ENCODE measurements at regions of chr7 and their contacts with region 1.

Region 1: GRCh38 chr7:93055543-93056107 is 62.2 kb downstream of the SAMD9 start:
- DNase-seq: peak in 4 of 14 experiments; percentile 7 to 66 (median 62)
- ATAC-seq: peak; percentile 76
- H3K4me3 ChIP-seq: no peak overlapping the region
- H3K4me3 Mint-ChIP-seq: no peak overlapping the region
- H3K27ac ChIP-seq: no peak overlapping the region
- H3K27ac Mint-ChIP-seq: no peak overlapping the region
- H3K4me1 ChIP-seq: no peaks in the 10 kb centered on the region
- H3K4me1 Mint-ChIP-seq: no peaks in the 10 kb centered on the region
- H3K27me3 ChIP-seq: peaks cover 0 to 5% of the 10 kb centered on the region in 2 experiments
- H3K27me3 Mint-ChIP-seq: no peaks in the 10 kb centered on the region
- CTCF ChIP-seq: peak; percentile 93

Region 2: DNA sequence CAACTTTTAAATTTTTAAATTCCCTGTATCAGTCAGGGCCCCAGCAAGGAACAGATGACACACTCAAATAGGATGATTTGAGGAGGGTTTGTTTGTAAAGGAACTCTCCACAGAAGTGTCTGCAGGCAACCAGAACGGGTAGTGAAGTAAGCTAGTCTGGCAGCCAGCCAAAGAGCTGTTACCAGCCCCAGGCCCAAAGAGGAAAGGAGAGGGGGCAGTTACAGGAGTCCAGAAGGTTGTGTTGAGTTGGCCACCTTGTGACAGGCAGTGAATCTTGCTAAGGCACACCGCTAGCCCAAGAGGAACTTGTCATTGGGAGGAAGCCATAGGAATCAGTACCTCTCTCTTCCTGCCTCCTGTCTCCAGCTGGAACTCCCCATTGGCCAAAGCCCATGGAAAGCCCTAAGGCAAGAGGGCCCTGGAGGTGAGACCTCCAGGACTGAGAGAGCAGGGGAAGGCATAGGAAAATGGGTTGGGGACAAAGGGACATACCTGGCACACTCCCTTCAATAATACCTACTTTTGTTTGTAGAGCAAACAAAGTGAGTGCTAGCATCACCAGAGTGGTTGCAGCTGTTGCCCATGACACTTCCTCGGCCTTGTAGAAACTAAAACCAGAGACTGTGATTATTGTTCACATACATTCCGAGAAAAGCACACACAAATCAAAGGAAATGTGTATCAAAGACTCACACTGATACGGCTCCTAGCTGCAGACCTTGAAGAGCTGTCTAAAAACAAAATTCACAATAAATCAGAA is 633.8 kb before region 1 on chr7:
- CTCF ChIA-PET with region 1: no interaction called
- POLR2A ChIA-PET with region 1: no interaction called
- intact Hi-C with region 1: loop called (anchors 1 to 5 kb)
- DNase-seq: no peak
- ATAC-seq: no peak
- H3K4me3 ChIP-seq: no peak overlapping the region
- H3K4me3 Mint-ChIP-seq: no peak overlapping the region
- H3K27ac ChIP-seq: no peak overlapping the region
- H3K27ac Mint-ChIP-seq: no peak overlapping the region
- H3K4me1 ChIP-seq: peaks cover 11% of the 10 kb centered on the region
- H3K4me1 Mint-ChIP-seq: peaks cover 12% of the 10 kb centered on the region
- H3K27me3 ChIP-seq: peaks cover 2 to 11% of the 10 kb centered on the region in 2 experiments
- H3K27me3 Mint-ChIP-seq: peaks cover 12% of the 10 kb centered on the region
- CTCF ChIP-seq: no peak

Region 3: DNA sequence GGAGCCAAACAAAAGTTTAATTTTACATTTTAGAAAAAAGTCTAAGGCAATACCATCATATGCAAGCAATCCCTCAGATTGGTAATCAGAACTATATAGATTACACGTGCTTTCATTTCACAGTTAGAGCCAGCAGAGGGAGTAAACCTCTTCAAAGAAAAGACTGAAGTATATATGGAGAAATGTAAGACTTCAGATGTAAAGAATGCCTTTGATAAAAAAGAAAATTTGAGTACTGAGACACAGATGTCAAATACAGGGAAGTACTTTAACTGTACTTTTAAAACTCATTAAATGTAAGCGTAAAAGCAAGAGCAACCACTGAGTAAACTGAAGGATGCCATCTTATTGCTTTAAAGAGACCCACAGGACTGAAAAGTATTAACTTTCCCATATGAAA is 364.0 kb before region 1 on chr7:
- CTCF ChIA-PET with region 1: no interaction called
- POLR2A ChIA-PET with region 1: no interaction called
- intact Hi-C with region 1: loop called (anchors 1 to 5 kb)
- DNase-seq: peak in 4 of 14 experiments; percentile 26 to 74 (median 68)
- ATAC-seq: peak; percentile 90
- H3K4me3 ChIP-seq: no peak overlapping the region
- H3K4me3 Mint-ChIP-seq: no peak overlapping the region
- H3K27ac ChIP-seq: no peak overlapping the region
- H3K27ac Mint-ChIP-seq: no peak overlapping the region
- H3K4me1 ChIP-seq: no peaks in the 10 kb centered on the region
- H3K4me1 Mint-ChIP-seq: peaks cover 17% of the 10 kb centered on the region
- H3K27me3 ChIP-seq: no peaks in the 10 kb centered on the region
- H3K27me3 Mint-ChIP-seq: no peaks in the 10 kb centered on the region
- CTCF ChIP-seq: peak; percentile 67

Region 4: DNA sequence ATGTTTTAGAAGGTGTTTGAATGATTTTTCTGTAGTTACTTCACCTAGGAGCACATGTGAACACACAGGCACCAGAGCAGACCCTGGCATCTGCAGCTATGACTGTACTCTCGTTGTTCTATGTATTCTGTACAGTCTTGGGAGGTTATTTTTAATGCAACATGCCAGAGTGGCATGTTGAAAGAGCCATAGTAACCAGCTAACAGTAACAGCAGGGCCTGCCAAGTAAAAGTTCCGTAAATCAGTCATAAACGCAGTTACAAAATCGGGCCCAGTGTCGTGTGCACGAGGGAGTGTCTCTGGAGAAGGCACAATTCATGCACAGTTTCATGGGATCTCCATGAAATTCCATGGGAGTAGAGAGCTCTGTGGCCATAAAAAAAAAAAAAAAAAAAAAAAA is 111.0 kb before region 1 on chr7:
- CTCF ChIA-PET with region 1: no interaction called
- POLR2A ChIA-PET with region 1: no interaction called
- intact Hi-C with region 1: no loop called
- DNase-seq: no peak
- ATAC-seq: no peak
- H3K4me3 ChIP-seq: no peak overlapping the region
- H3K4me3 Mint-ChIP-seq: no peak overlapping the region
- H3K27ac ChIP-seq: no peak overlapping the region
- H3K27ac Mint-ChIP-seq: no peak overlapping the region
- H3K4me1 ChIP-seq: no peaks in the 10 kb centered on the region
- H3K4me1 Mint-ChIP-seq: no peaks in the 10 kb centered on the region
- H3K27me3 ChIP-seq: no peaks in the 10 kb centered on the region
- H3K27me3 Mint-ChIP-seq: no peaks in the 10 kb centered on the region
- CTCF ChIP-seq: no peak

Measured in CD4-positive, alpha-beta T cell (primary cell).